ENCODE measurements at regions of chr4 and their contacts with region 1.

Region 1: DNA sequence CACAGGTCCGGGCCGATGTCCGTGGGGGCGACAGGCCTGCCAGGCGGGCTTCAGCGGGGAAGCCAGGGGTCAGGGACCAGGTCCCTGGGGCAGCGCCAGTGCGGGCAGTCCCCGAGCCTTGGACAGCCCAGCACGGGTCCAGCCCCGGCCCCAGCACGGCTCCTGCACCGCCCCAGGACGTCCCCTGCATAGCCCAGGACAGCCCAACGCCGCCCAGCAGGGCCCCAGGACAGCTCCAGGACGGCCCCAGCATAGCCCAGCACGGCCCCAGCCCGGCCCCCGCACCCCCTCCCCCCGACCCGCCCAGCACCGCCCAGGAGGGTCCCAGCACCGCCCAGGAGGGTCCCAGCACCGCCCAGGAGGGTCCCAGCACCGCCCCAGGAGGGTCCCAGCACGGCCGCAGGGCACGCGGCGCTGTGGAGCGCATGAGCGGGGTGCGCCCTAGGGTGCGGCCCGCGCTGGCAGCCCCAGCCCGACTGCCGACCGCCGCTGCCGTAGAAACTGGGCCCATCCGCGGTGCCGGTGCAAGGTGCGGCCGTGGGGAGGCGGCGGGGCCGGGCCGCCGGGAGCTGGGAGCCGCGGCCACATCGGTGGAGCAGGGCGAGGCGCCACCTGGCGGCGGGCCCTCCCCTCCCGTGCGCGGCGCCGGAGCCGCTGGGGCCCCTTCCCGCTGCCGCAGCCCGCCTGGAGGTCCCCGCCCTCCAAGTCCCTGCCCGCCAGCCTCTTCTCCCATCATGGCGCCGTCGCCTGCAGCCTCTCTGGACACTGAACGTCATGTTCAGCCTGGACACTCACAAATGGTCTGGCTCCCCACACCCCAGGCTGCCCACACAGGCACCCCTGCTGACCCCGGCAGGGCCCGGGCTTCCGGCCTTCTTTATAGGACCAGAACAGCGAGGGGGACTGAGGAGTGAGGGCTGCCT is 106.8 kb upstream of the NKX1-1 start:
- DNase-seq: peak; percentile 78
- ATAC-seq: peak; percentile 76
- H3K4me3 Mint-ChIP-seq: peak overlapping the region; percentile 39
- H3K27ac Mint-ChIP-seq: no peak overlapping the region
- H3K4me1 Mint-ChIP-seq: no peaks in the 10 kb centered on the region
- H3K27me3 Mint-ChIP-seq: no peaks in the 10 kb centered on the region; the same call in 1 of the 2 replicates
- CTCF ChIP-seq: peak; percentile 76

Region 2: GRCh38 chr4:1410491-1411325 is 102.3 kb before region 1 on chr4:
- CTCF ChIA-PET with region 1: interaction called, 19 read pairs
- POLR2A ChIA-PET with region 1: no interaction called
- DNase-seq: peak; percentile 94
- ATAC-seq: peak; percentile 74
- H3K4me3 Mint-ChIP-seq: no peak overlapping the region
- H3K27ac Mint-ChIP-seq: no peak overlapping the region
- H3K4me1 Mint-ChIP-seq: peaks cover 10% of the 10 kb centered on the region
- H3K27me3 Mint-ChIP-seq: peaks cover 71% of the 10 kb centered on the region
- CTCF ChIP-seq: no peak

Region 3: DNA sequence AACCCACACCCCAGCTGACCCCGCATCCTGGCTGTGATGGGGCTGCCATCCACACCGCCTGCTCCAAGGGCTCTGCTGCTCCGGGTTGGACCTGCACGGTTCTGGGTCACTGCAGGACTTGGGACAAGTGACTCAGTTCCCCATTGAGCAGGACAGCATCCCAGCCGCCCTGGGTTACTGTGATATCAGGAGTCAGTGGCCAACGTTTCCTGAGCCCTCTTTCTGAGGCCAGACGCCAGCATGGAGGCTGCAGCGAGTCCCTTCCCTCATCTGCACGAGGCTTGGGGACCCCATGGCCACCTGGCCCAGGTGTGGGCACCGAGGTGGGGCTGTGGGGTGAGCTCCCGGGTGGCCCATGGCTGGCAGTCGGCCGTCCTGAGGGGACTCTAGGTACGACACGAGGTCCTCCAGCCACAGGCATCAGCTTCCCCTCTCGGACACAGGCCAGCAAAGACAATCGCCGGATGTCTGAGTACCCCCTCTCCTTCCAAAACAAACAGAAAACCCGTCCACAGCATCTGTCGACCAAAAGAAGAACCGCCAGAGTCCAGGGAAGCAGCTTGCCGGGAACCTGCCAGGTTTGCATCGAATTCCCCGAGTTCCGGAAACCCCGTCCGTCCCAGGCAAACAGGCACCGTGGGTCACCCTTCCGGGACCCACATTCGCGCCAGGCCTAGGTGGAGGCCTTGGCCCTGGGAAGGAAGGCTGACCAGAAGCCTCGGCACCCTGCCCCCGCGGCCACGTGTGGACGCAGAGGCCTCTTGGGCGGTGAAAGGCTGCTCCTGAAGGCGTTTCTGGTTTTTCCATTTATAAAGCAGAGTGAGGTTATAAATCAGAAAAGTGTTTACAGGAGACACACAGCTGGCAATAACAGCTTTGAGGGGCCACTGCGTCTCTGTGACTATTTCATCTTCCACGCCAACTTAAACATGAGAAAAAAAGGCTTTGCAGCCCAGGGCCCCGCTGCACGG is 35.1 kb after region 1 on chr4:
- CTCF ChIA-PET with region 1: interaction called, 11 read pairs
- POLR2A ChIA-PET with region 1: no interaction called
- DNase-seq: no peak
- ATAC-seq: no peak
- H3K4me3 Mint-ChIP-seq: no peak overlapping the region
- H3K27ac Mint-ChIP-seq: peak overlapping the region; percentile 81; the same call in 1 of the 2 replicates
- H3K4me1 Mint-ChIP-seq: peaks cover 5% of the 10 kb centered on the region
- H3K27me3 Mint-ChIP-seq: peaks cover 3% of the 10 kb centered on the region; the same call in 1 of the 2 replicates
- CTCF ChIP-seq: no peak